Activated T-helper 2 cell treated with anti-CD3 and anti-CD28 coated beads, Interferon-gamma antibody, Interleukin-2, Interleukin-4, amounts not matched to agents 10 μg/mL and 5 μg/mL and 100 μg/mL, durations not matched to agents 14 hours and 24 hours and 36 hours (primary cell): ENCODE measurements at regions of chr16 and their contacts with region 1.

Region 1: GRCh38 chr16:70348991-70349390 is 2.3 kb downstream of the DDX19A start:
- DNase-seq: no peak
- H3K4me3 Mint-ChIP-seq: no peak overlapping the region
- H3K27ac Mint-ChIP-seq: peak overlapping the region; percentile 28
- H3K4me1 Mint-ChIP-seq: peaks cover 24% of the 10 kb centered on the region
- H3K27me3 Mint-ChIP-seq: no peaks in the 10 kb centered on the region

Region 2: DNA sequence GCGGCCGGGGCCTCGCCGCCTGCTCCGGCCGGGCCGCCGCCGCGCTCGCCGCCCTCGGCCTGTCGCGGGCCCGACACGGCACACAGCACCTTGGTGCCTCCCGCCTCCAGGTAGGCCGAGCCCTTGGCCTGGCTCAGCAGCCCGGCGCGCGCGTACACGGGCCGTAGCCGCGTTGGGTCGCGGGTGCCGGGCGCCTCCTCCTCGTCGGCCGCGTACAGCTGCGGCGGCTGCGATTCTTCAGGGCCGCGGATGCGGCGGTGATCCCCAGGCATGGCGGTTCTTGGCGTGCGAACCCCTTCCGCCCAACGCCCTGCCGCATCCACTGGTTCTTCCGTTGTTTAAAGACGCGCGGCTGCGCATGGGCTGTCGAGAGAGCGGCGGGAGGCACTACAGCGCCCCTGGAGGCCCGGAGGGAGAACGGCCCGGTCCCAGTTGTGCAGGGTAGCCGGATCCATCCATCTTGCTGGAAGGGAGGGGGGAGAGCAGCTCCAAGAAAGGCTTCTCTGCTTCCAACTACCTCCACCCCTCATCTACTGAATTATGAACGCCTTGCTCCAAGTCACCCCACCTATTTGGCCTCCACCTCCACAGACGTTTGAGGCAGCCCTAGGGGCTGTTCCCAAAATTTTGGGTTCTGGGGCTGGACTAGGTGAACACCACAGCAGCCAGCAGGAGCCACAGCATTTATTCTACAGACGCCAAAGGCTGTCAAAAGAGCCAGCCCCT is 97.2 kb before region 1 on chr16 and contains the start of gene EXOSC6:
- intact Hi-C with region 1: loop called (anchors 5 kb)
- DNase-seq: peak; percentile 92
- H3K4me3 Mint-ChIP-seq: peak within 1 kb of the TSS; percentile 87
- H3K27ac Mint-ChIP-seq: peak within 1 kb of the TSS; percentile 95
- H3K4me1 Mint-ChIP-seq: peaks cover 11% of the 10 kb centered on the region
- H3K27me3 Mint-ChIP-seq: no peaks in the 10 kb centered on the region
- total RNA-seq, gene EXOSC6: 32.0 and 32.6 TPM in 2 replicates

Region 3: DNA sequence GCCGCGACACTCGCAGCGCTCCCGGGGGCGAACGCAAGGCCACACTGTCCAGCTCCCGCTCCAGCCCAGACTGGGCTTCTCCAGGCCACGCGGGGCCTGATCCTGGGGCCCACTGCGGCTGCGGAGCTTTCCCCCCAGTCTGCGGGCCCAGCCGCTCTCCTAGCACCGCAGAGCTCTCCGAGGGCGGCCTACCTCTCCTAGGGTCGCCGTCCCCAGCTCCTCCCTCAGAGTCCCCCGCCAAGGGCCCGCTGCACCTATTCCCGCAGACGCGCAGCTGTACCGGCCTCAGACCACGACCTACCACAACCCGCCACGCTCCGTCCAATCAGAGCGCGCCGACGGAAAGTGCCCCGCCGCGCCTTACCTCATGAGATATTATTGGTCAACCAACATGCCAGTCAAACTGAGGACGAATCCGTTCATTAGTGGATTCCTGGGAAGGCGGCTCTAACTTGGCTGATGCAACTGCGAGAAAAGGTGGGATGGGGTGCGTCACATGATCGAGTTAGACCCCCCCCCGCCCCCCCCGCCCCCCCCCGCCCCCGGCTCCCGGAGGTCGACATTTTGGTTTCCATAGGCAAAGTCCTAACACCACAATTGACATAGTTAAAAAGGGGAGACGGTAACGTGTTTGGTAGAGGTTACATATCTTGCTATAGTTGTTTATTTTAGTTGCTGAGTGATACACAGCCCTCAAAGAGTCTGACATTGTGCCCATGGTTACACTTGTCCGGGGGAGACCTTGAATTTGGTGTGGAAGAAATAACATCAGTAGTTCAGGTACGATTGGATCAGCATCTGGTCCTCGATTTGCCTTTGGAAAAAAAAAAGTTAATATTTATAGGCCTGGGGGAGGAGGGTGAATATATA is 59.5 kb before region 1 on chr16 and contains the start of gene AARS1:
- intact Hi-C with region 1: loop called (anchors 2 kb)
- DNase-seq: peak; percentile 96
- H3K4me3 Mint-ChIP-seq: peak within 1 kb of the TSS; percentile 97
- H3K27ac Mint-ChIP-seq: peak within 1 kb of the TSS; percentile 98
- H3K4me1 Mint-ChIP-seq: peaks cover 19% of the 10 kb centered on the region
- H3K27me3 Mint-ChIP-seq: no peaks in the 10 kb centered on the region
- total RNA-seq, gene AARS1: 103 and 106 TPM in 2 replicates

Region 4: DNA sequence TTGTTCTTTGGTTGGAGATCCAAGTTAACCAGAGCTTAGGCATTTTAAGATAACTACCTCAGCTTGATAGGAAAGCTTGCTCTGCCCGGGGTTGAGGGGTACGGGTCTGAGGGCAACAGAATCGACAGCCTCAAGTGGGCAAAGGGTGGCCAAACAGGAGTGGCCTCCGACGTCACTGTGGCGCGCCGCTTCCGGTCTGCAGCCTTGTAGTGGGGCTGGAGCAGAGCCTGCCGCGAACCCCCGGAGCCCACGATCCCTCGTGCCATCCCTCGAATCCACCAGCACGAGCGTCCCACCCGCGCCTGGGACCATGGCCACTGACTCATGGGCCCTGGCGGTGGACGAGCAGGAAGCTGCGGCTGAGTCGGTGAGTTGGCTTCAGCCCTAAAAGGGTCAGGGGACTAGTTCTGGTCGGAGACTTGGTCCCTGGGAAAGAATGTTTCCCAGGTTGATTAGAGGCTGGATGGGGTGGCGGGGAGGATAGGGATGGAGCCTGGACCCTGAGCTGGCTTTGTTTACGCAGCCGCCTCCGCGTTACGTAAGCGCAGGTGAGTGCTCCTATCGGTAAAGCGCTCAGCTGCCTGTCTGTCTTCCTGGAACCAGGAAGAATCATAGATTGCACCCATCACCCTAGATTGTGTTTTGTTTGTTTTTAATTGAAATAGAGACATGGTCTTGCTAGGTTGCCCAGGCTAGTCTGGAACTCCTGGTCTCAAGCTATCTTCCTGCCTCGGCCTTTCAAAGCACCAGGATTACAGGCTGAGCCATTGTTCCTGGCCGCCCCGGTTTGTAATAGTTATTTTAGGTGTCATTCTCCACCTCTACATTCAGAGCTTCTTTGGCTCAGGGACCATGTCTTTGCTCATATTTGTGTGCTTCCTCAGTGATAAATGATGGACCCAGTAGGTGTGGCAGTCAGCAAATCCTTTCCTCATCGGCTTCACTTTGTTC is 49.7 kb before region 1 on chr16 and contains the start of gene DDX19B:
- intact Hi-C with region 1: loop called (anchors 1 kb)
- DNase-seq: peak; percentile 63
- H3K4me3 Mint-ChIP-seq: peak within 1 kb of the TSS; percentile 87
- H3K27ac Mint-ChIP-seq: peak within 1 kb of the TSS; percentile 95
- H3K4me1 Mint-ChIP-seq: peaks cover 28% of the 10 kb centered on the region
- H3K27me3 Mint-ChIP-seq: no peaks in the 10 kb centered on the region
- total RNA-seq, gene DDX19B: 31.0 and 33.3 TPM in 2 replicates

Region 5: DNA sequence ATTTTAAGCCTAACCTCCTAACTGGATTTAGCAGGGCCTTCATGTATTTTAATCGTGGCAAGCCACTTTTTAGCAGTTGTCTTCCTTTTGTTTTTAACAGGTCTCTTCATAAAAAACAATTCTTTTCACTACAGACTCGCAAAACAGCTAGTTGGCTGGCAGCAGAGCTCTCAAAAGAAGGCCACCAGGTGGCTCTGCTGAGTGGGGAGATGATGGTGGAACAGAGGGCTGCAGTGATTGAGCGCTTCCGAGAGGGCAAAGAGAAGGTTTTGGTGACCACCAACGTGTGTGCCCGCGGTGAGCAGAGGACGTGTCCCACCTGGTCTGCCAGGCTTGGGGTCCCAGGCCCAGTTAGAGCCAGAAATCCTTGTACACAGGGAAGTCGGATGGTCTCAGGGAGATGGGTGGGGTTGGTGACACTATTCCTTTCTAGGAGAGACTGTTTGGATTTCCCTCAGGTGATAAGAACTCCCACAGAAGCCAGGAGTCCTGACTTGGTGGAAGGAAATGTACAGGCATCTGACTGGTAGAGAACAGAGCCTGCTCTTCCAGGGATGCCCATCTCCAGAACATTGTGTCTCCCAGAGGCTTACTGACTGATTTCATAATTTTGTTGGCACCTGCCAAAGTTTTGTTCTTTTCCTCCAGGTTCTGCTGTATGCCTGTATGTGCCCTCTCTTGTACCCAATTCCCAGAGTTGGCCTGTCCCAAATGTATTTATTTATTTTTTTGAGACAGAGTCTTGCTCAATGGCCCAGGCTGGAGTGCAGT is 17.2 kb before region 1 on chr16:
- intact Hi-C with region 1: no loop called
- DNase-seq: no peak
- H3K4me3 Mint-ChIP-seq: no peak overlapping the region
- H3K27ac Mint-ChIP-seq: no peak overlapping the region
- H3K4me1 Mint-ChIP-seq: no peaks in the 10 kb centered on the region
- H3K27me3 Mint-ChIP-seq: no peaks in the 10 kb centered on the region

Region 6: GRCh38 chr16:70407811-70408274 is 58.9 kb after region 1 on chr16:
- intact Hi-C with region 1: no loop called
- DNase-seq: no peak
- H3K4me3 Mint-ChIP-seq: no peak overlapping the region
- H3K27ac Mint-ChIP-seq: peak overlapping the region; percentile 22
- H3K4me1 Mint-ChIP-seq: peaks cover 42% of the 10 kb centered on the region
- H3K27me3 Mint-ChIP-seq: no peaks in the 10 kb centered on the region

Region 7: GRCh38 chr16:70540994-70541393 is 192.0 kb after region 1 on chr16:
- intact Hi-C with region 1: no loop called
- DNase-seq: no peak
- H3K4me3 Mint-ChIP-seq: no peak overlapping the region
- H3K27ac Mint-ChIP-seq: no peak overlapping the region
- H3K4me1 Mint-ChIP-seq: peaks cover 13% of the 10 kb centered on the region
- H3K27me3 Mint-ChIP-seq: no peaks in the 10 kb centered on the region

Region 8: GRCh38 chr16:70576431-70577255 is 227.7 kb after region 1 on chr16:
- intact Hi-C with region 1: no loop called
- DNase-seq: no peak
- H3K4me3 Mint-ChIP-seq: no peak overlapping the region
- H3K27ac Mint-ChIP-seq: peak overlapping the region; percentile 25
- H3K4me1 Mint-ChIP-seq: peaks cover 7% of the 10 kb centered on the region
- H3K27me3 Mint-ChIP-seq: no peaks in the 10 kb centered on the region